Mammary epithelial cell (primary cell): ENCODE measurements at regions of chr2 and their contacts with region 1.

Region 1: DNA sequence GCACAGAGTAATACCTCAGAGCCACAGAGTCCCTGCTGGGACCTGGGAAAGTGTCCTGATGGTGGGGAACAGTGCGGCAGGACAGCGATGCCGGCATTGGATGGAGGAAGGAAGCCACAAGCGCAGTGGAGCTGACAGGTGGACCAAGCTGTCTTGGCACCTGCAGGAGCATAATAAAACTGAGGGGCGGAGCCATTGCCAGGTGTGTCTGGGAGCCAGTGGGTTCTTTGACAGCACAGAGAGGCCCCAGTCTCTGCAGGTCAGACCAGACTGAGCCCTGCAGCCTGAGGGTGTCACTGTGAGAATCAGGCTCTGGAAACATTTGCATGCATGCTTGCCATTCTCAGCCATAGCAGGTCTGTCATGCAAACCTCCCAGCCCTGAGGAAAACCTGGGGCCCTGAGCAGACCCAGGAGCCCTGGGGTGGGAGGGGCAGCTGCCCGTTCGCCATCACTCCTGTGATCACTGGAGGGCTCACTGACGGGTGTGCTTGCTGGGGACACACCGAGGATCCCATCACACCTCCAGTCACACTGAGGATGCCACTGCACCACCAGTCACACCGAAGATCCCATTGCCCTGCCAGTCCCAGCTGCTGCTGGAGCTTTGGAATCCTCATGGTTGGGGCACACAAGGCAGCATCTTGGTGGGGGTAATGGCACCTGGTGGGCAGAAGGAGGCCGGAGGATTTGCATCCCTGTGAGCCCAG is 210.6 kb upstream of the HDAC4 start:
- DNase-seq: no peak
- H3K4me3 ChIP-seq: no peak overlapping the region
- H3K27ac ChIP-seq: no peak overlapping the region
- H3K4me1 ChIP-seq: no peaks in the 10 kb centered on the region
- H3K27me3 ChIP-seq: no peaks in the 10 kb centered on the region
- CTCF ChIP-seq: no peak

Region 2: GRCh38 chr2:239544143-239544917 is 67.0 kb before region 1 on chr2:
- CTCF ChIA-PET with region 1: no interaction called
- dilution Hi-C with region 1: loop called (anchors 5 kb)
- in situ Hi-C with region 1: no loop called
- intact Hi-C with region 1: no loop called
- DNase-seq: no peak
- H3K4me3 ChIP-seq: no peak overlapping the region
- H3K27ac ChIP-seq: no peak overlapping the region
- H3K4me1 ChIP-seq: no peaks in the 10 kb centered on the region
- H3K27me3 ChIP-seq: no peaks in the 10 kb centered on the region
- CTCF ChIP-seq: no peak